Esophagus muscularis mucosa (tissue), 4 donors: ENCODE measurements at regions of chr12 and their contacts with region 1.

Region 1: GRCh38 chr12:54191550-54192022 is 2.8 kb upstream of the SMUG1 start:
- DNase-seq: peak; percentile 93
- H3K4me3 ChIP-seq: no peak overlapping the region
- H3K27ac ChIP-seq: no peak overlapping the region
- H3K4me1 ChIP-seq: peaks cover 4 to 31% (median 27%) of the 10 kb centered on the region in 4 donors
- H3K27me3 ChIP-seq: peaks cover 0 to 37% (median 12%) of the 10 kb centered on the region in 4 donors
- CTCF ChIP-seq: peak; percentile 72 to 85 (median 83)
- EP300 ChIP-seq: no peak
- POLR2A ChIP-seq: no peak

Region 2: GRCh38 chr12:54005853-54006686 is 185.5 kb before region 1 on chr12:
- intact Hi-C with region 1: loop called (anchors 2 kb)
- DNase-seq: peak; percentile 96
- H3K4me3 ChIP-seq: peak overlapping the region in 3 of 4 donors; percentile 2 to 38 (median 20)
- H3K27ac ChIP-seq: no peak overlapping the region
- H3K4me1 ChIP-seq: peaks cover 16 to 34% (median 23%) of the 10 kb centered on the region in 4 donors
- H3K27me3 ChIP-seq: peaks cover 11 to 99% (median 93%) of the 10 kb centered on the region in 4 donors
- CTCF ChIP-seq: peak; percentile 93 to 97 (median 96)
- EP300 ChIP-seq: no peak
- POLR2A ChIP-seq: no peak

Region 3: GRCh38 chr12:54032627-54033100 is 158.9 kb before region 1 on chr12 and contains the start of gene HOXC5:
- intact Hi-C with region 1: loop called (anchors 2 kb)
- DNase-seq: no peak
- H3K4me3 ChIP-seq: peak within 1 kb of the TSS; percentile 50 to 69 (median 63)
- H3K27ac ChIP-seq: peak within 1 kb of the TSS; percentile 70 to 83 (median 74)
- H3K4me1 ChIP-seq: peaks cover 14 to 45% (median 37%) of the 10 kb centered on the region in 4 donors
- H3K27me3 ChIP-seq: peaks cover 0 to 82% (median 28%) of the 10 kb centered on the region in 4 donors
- CTCF ChIP-seq: peak; percentile 95 to 99 (median 98)
- EP300 ChIP-seq: no peak
- POLR2A ChIP-seq: no peak
- total RNA-seq, gene HOXC5: 0.83 to 2.0 TPM in 2 of 4 donors, not detected in the others

Region 4: DNA sequence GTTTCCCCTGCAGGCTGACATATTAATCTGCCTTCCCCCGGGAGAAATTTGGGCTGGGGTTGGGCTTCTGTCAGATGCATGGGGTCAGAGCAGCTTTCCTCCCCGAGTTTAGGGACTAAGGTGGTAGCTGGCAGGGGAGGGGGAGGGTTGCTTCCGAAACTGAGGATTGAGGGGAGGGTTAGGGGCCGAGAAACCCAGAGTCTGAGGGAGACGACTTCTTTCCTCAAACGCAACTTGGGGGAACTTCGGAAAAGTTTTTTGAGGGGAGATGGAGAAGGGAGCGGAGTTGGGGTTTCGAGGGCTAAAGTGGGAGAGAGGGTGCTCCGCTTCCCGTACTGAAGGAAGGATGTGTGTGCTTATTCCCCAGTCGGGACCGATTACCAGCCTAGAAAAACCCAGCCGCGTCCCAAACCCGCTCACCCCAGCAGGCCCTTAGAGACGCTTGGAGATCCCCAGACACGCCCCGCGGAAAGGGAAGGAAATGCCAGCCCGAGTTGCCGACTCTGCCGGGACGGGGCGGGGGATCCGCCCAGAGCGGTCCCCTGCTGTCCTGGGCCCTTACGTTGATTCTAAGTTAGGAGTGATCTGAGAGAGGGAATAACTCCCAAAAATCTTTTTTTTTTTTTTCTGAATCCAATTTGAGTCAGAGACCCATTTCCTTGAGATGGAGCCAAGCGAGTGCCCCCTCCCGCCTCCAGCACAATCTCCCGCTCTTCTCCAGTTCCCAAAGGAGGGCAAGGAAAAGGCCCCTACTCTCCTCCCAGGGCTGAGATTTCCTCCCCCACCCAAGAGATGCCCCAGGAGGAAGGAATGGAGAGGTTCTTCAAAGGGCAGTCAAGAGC is 64.7 kb before region 1 on chr12:
- intact Hi-C with region 1: loop called (anchors 5 kb)
- DNase-seq: no peak
- H3K4me3 ChIP-seq: peak overlapping the region; percentile 64 to 93 (median 70)
- H3K27ac ChIP-seq: peak overlapping the region; percentile 81 to 87 (median 84)
- H3K4me1 ChIP-seq: peaks cover 10 to 49% (median 42%) of the 10 kb centered on the region in 4 donors
- H3K27me3 ChIP-seq: no peaks in the 10 kb centered on the region
- CTCF ChIP-seq: no peak
- EP300 ChIP-seq: no peak
- POLR2A ChIP-seq: no peak

Region 5: GRCh38 chr12:54306925-54307741 is 115.5 kb after region 1 on chr12:
- intact Hi-C with region 1: no loop called
- DNase-seq: no peak
- H3K4me3 ChIP-seq: no peak overlapping the region
- H3K27ac ChIP-seq: no peak overlapping the region
- H3K4me1 ChIP-seq: peaks cover 5 to 8% (median 5%) of the 10 kb centered on the region in 4 donors
- H3K27me3 ChIP-seq: peaks cover 0 to 11% (median 0%) of the 10 kb centered on the region in 4 donors
- CTCF ChIP-seq: no peak
- EP300 ChIP-seq: no peak
- POLR2A ChIP-seq: no peak

Region 6: DNA sequence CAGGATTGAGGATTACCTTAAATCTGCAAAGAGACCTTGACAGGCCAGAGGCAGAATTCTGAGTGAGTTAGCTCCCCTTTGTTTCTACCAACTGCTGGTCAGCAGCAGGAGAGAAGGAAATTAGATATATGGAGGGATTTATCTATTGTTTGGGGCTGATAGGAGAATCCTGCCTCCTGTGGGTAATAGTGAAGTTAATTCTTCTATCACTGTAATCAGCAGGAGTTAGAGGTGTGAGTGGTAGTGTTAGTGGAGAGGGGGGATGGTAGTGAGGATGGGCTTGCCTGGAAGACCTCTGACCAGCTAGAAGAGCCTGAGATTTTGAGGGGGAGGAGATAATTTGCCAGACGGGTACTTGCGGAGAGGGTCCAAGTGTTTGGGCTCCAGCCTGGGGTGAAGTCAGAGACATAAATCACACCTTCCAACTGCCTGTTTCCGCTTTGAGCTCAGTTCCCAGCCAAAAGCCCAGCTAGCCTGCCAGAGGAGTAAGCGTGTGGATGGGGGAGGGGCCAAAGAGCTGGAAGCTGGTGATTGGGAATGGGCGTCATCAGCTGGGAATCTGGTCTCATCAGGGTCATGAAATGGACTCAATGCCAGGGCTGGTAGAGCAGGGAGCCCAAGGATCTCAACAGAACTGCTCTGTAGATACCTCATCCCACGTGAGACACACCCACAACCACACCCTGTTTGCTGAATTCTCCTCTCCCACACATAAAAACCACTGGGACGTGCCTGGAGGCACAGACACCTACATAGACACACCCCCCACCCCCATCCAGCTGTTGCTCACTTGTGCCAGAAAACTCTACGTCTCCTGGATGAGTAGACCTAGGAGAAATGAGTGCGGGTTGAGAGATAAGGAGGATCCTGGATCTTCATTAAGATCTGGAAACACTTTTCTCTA is 240.6 kb after region 1 on chr12:
- intact Hi-C with region 1: no loop called
- DNase-seq: no peak
- H3K4me3 ChIP-seq: peak overlapping the region in 3 of 4 donors; percentile 2 to 15 (median 15)
- H3K27ac ChIP-seq: peak overlapping the region; percentile 47 to 97 (median 94)
- H3K4me1 ChIP-seq: peaks cover 58 to 66% (median 63%) of the 10 kb centered on the region in 4 donors
- H3K27me3 ChIP-seq: no peaks in the 10 kb centered on the region
- CTCF ChIP-seq: no peak
- EP300 ChIP-seq: peak; percentile 40
- POLR2A ChIP-seq: no peak